Naive thymus-derived CD4-positive, alpha-beta T cell (primary cell): ENCODE measurements at regions of chrX and their contacts with region 1.

Region 1: GRCh38 chrX:68828740-68829552 is at the start of gene EFNB1:
- DNase-seq: peak; percentile 67 to 90 (median 84)
- ATAC-seq: peak; percentile 97
- H3K4me3 ChIP-seq: peak within 1 kb of the TSS; percentile 76
- H3K4me3 Mint-ChIP-seq: peak within 1 kb of the TSS; percentile 90 to 96 (median 94)
- H3K27ac ChIP-seq: peak within 1 kb of the TSS; percentile 69
- H3K27ac Mint-ChIP-seq: peak within 1 kb of the TSS; percentile 75 to 94 (median 83)
- H3K4me1 ChIP-seq: peaks cover 6 to 9% of the 10 kb centered on the region in 2 donors
- H3K4me1 Mint-ChIP-seq: peaks cover 7 to 24% (median 17%) of the 10 kb centered on the region in 7 donors
- H3K27me3 ChIP-seq: no peaks in the 10 kb centered on the region
- H3K27me3 Mint-ChIP-seq: peaks cover 0 to 15% (median 0%) of the 10 kb centered on the region in 5 donors
- total RNA-seq, gene EFNB1: 2.6 to 4.8 (median 4.1) TPM

Region 2: DNA sequence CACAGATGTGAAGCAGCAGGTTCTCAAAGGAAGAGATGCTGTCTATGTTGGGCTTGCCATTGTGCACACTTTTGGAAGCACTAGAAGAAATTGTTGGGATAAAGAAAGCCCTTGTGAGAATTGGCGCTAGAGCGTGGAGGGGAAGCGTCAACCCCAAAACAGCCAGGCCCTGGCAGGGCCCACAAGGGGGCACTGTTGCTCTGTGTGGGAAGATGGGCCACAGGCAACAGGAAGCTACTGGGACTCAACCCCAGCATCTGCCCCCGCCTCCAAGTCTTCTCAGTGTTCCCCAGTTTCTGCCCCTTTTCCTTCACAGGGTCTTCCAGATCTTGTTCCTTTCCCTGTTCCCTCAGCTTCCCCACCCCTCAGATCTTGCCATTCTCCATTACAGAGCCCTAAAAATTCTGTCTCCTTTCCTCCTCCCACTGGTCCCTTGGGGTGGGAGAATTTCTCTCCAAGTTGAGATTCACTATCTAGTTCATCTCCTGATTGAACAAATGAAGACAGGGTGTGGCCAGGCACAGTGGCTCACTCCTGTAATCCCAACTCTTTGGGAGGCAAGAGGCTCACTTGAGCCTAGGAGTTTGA is 95.9 kb before region 1 on chrX:
- CTCF ChIA-PET with region 1: interaction called, 3 read pairs
- POLR2A ChIA-PET with region 1: no interaction called
- intact Hi-C with region 1: loop called (anchors 1 to 5 kb)
- DNase-seq: peak; percentile 21 to 69 (median 50)
- ATAC-seq: peak; percentile 78
- H3K4me3 ChIP-seq: no peak overlapping the region
- H3K4me3 Mint-ChIP-seq: no peak overlapping the region
- H3K27ac ChIP-seq: no peak overlapping the region
- H3K27ac Mint-ChIP-seq: no peak overlapping the region
- H3K4me1 ChIP-seq: no peaks in the 10 kb centered on the region
- H3K4me1 Mint-ChIP-seq: peaks cover 0 to 2% (median 0%) of the 10 kb centered on the region in 7 donors
- H3K27me3 ChIP-seq: no peaks in the 10 kb centered on the region
- H3K27me3 Mint-ChIP-seq: peaks cover 0 to 14% (median 9%) of the 10 kb centered on the region in 5 donors

Region 3: GRCh38 chrX:69158166-69158980 is 329.4 kb after region 1 on chrX:
- CTCF ChIA-PET with region 1: interaction called, 3 read pairs
- POLR2A ChIA-PET with region 1: no interaction called
- intact Hi-C with region 1: loop called in 1 of 2 experiments (anchors 1 kb)
- DNase-seq: peak in 5 of 9 donors; percentile 23 to 43 (median 31)
- ATAC-seq: peak; percentile 65
- H3K4me3 ChIP-seq: no peak overlapping the region
- H3K4me3 Mint-ChIP-seq: no peak overlapping the region
- H3K27ac ChIP-seq: no peak overlapping the region
- H3K27ac Mint-ChIP-seq: peak overlapping the region in 1 of 9 donors; percentile 76
- H3K4me1 ChIP-seq: peaks cover 0 to 7% of the 10 kb centered on the region in 2 donors
- H3K4me1 Mint-ChIP-seq: peaks cover 8 to 26% (median 21%) of the 10 kb centered on the region in 7 donors
- H3K27me3 ChIP-seq: no peaks in the 10 kb centered on the region
- H3K27me3 Mint-ChIP-seq: no peaks in the 10 kb centered on the region

Region 4: GRCh38 chrX:69285881-69286564 is 457.1 kb after region 1 on chrX:
- CTCF ChIA-PET with region 1: interaction called, 8 read pairs
- POLR2A ChIA-PET with region 1: no interaction called
- intact Hi-C with region 1: loop called (anchors 1 kb)
- DNase-seq: peak; percentile 10 to 67 (median 48)
- ATAC-seq: peak; percentile 76
- H3K4me3 ChIP-seq: no peak overlapping the region
- H3K4me3 Mint-ChIP-seq: peak overlapping the region in 7 of 10 donors; percentile 12 to 53 (median 38)
- H3K27ac ChIP-seq: no peak overlapping the region
- H3K27ac Mint-ChIP-seq: no peak overlapping the region
- H3K4me1 ChIP-seq: no peaks in the 10 kb centered on the region
- H3K4me1 Mint-ChIP-seq: no peaks in the 10 kb centered on the region
- H3K27me3 ChIP-seq: no peaks in the 10 kb centered on the region
- H3K27me3 Mint-ChIP-seq: no peaks in the 10 kb centered on the region

Region 5: GRCh38 chrX:70133303-70134115 is 1304.6 kb after region 1 on chrX and contains the start of gene IGBP1:
- CTCF ChIA-PET with region 1: interaction called, 3 read pairs
- POLR2A ChIA-PET with region 1: interaction called, 12 read pairs
- intact Hi-C with region 1: loop called in 1 of 2 experiments (anchors 1 kb)
- DNase-seq: peak; percentile 40 to 90 (median 82)
- ATAC-seq: peak; percentile 90
- H3K4me3 ChIP-seq: peak within 1 kb of the TSS; percentile 94
- H3K4me3 Mint-ChIP-seq: peak within 1 kb of the TSS; percentile 95 to 99 (median 99)
- H3K27ac ChIP-seq: peak within 1 kb of the TSS; percentile 82
- H3K27ac Mint-ChIP-seq: peak within 1 kb of the TSS; percentile 91 to 99 (median 97)
- H3K4me1 ChIP-seq: peaks cover 16 to 18% of the 10 kb centered on the region in 2 donors
- H3K4me1 Mint-ChIP-seq: peaks cover 14 to 47% (median 29%) of the 10 kb centered on the region in 7 donors
- H3K27me3 ChIP-seq: no peaks in the 10 kb centered on the region
- H3K27me3 Mint-ChIP-seq: no peaks in the 10 kb centered on the region
- total RNA-seq, gene IGBP1: 46.7 to 70.1 (median 58.9) TPM